Calu3 (cell line): ENCODE measurements at regions of chr1 and their contacts with region 1.

Region 1: DNA sequence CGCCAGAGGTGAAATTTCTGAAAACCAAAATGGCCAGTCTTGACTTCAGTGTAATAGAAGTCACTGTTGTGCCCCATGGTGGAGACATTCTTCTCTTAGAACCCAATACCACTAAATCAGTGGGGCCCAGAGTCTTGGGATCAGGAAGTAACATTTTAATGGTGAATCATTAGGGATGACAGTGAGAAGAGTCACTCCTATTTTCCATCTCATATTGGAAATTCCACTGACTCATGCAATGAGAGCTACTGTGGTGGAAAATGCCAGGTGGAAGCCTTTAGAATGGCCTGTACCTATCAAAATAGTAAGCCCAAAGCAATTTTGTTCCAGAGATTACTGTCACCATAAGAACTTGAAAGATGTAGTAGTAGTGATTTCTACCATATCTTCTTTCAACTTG is 20.6 kb upstream of the PPM1J start:
- DNase-seq: no peak
- H3K4me3 Mint-ChIP-seq: no peak overlapping the region
- H3K27ac Mint-ChIP-seq: no peak overlapping the region
- H3K4me1 Mint-ChIP-seq: no peaks in the 10 kb centered on the region
- H3K27me3 Mint-ChIP-seq: peaks cover 18% of the 10 kb centered on the region
- CTCF ChIP-seq: no peak

Region 2: GRCh38 chr1:112637254-112638116 is 98.3 kb before region 1 on chr1:
- CTCF ChIA-PET with region 1: interaction called, 10 read pairs
- intact Hi-C with region 1: no loop called
- DNase-seq: peak; percentile 13
- H3K4me3 Mint-ChIP-seq: no peak overlapping the region
- H3K27ac Mint-ChIP-seq: peak overlapping the region; percentile 40
- H3K4me1 Mint-ChIP-seq: peaks cover 34% of the 10 kb centered on the region
- H3K27me3 Mint-ChIP-seq: no peaks in the 10 kb centered on the region
- CTCF ChIP-seq: no peak

Region 3: DNA sequence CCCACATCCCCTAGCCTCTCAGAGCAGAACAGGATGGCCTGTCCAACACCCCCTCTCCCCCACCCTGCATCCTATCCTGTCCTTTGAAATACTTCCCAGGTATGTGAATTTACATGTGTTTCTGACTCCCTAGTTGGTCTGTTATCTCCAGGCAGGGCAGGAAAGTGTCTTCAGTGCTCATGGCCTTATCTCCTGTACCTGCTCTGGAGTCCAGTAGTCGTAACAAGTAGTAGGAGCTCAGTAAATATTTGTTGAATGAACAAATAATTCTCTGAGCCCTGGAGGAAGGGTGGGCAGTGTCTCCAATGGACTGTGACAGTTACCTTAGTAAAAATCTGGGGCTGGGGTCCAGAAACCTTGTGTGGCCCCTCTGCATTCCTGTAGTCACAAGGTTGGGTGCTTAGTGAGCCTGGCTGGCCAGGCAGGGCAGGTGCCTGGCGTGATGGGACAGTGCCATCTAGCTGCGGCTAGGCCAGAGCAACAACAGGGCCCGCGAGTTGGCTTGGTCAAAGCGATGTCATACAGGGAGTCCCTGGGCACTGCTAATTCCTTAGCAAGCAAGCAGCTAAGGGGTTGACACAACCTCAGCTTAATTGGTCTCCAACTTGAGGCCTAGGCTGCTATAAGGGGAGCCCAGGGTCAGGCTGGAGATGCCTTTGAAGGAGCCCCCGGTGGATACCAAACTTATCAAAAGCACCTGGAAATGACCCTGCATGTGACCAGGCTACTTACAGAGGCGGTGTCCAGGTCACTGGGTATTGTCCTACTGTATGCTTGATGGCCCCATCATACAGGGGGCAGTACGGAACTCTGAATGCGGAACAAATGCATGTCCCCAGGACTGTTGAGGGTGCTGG is 68.4 kb after region 1 on chr1:
- CTCF ChIA-PET with region 1: no interaction called
- intact Hi-C with region 1: loop called (anchors 5 kb)
- DNase-seq: peak; percentile 72
- H3K4me3 Mint-ChIP-seq: no peak overlapping the region
- H3K27ac Mint-ChIP-seq: no peak overlapping the region
- H3K4me1 Mint-ChIP-seq: peaks cover 15% of the 10 kb centered on the region
- H3K27me3 Mint-ChIP-seq: no peaks in the 10 kb centered on the region
- CTCF ChIP-seq: peak; percentile 68

Region 4: DNA sequence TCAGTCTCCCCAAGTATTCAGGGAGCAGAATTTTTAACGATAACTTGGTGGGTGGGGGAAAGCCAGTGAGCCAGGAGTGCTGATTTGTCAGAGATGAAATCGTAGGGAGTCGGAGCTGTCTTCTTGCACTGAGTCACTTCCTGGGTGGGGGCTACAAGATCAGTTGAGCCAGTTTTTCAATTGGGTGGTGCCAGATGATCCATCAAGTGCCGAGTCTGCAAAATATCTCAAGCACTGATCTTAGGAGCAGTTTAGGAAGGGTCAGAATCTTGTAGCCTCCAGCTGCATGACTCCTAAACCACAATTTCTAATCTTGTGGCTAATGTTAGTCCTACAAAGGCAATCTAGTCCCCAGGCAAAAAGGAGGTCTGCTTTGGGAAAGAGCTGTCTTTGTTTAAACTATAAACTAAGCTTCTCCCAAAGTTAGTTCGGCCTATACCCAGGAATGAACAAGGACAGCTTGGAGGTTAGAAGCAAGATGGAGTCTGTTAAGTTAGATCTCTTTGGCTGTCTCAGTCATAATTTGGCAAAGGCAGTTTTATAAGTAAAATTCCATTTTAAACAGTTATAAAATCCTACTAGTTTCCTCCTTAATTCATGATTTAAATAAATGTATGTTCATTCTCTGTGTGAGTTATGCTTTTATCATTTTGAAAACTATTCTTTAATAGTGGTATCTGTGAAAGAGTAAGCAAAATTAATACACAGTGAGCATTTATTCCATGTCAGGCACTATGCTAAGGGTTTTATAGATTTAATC is 168.5 kb after region 1 on chr1:
- CTCF ChIA-PET with region 1: no interaction called
- intact Hi-C with region 1: no loop called
- DNase-seq: peak; percentile 31
- H3K4me3 Mint-ChIP-seq: peak overlapping the region; percentile 39
- H3K27ac Mint-ChIP-seq: peak overlapping the region; percentile 72
- H3K4me1 Mint-ChIP-seq: peaks cover 36% of the 10 kb centered on the region
- H3K27me3 Mint-ChIP-seq: no peaks in the 10 kb centered on the region
- CTCF ChIP-seq: no peak

Region 5: DNA sequence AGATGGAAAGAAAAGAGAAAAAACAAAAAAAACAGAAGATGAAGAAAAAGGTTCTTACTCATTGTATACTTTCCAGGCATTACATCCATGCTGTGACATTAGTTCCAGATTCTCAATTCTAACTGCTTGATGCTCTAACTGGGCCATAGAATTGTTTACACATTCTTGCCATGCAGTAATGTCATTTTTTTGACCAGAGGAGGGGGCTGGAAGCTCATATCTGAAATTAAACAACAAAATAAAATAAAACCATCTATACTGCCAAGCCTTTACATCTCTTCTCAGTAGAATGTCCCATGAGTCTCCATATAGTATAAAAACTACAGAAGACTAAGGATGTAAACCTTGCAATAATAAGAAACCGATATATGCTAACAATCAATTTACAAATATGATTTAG is 1839.8 kb after region 1 on chr1:
- CTCF ChIA-PET with region 1: no interaction called
- intact Hi-C with region 1: no loop called
- DNase-seq: no peak
- H3K4me3 Mint-ChIP-seq: no peak overlapping the region
- H3K27ac Mint-ChIP-seq: no peak overlapping the region
- H3K4me1 Mint-ChIP-seq: no peaks in the 10 kb centered on the region
- H3K27me3 Mint-ChIP-seq: no peaks in the 10 kb centered on the region
- CTCF ChIP-seq: no peak